PC-3 (cell line): ENCODE measurements at regions of chr1 and their contacts with region 1.

Region 1: DNA sequence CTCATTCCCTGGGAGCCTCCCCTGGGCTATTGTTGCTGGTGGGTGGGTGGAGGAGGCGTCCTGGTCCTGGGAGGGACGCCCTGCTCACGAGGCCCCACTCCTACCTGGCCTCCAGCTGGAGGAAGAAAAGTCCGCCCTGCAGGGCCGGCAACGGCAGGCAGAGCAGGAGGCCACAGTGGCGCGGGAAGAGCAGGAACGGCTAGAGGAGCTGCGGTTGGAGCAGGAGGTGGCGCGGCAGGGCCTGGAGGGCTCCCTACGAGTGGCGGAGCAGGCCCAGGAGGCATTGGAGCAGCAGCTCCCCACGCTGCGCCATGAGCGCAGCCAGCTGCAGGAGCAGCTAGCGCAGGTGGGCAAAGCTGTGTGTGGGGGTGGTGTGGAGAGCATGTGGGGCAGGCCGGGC is 24.9 kb downstream of the CROCC start:
- DNase-seq: no peak
- ATAC-seq: no peak
- H3K4me3 ChIP-seq: no peak overlapping the region
- H3K27ac ChIP-seq: no peak overlapping the region
- H3K4me1 ChIP-seq: peaks cover 20% of the 10 kb centered on the region
- H3K27me3 ChIP-seq: no peaks in the 10 kb centered on the region
- CTCF ChIP-seq: no peak

Region 2: GRCh38 chr1:17045634-17046333 is 99.1 kb after region 1 on chr1:
- CTCF ChIA-PET with region 1: no interaction called
- POLR2A ChIA-PET with region 1: no interaction called
- intact Hi-C with region 1: loop called (anchors 1 kb)
- DNase-seq: peak; percentile 69
- ATAC-seq: no peak
- H3K4me3 ChIP-seq: no peak overlapping the region
- H3K27ac ChIP-seq: no peak overlapping the region
- H3K4me1 ChIP-seq: no peaks in the 10 kb centered on the region
- H3K27me3 ChIP-seq: no peaks in the 10 kb centered on the region
- CTCF ChIP-seq: peak; percentile 81